ENCODE measurements at regions of chr15 and their contacts with region 1.

Region 1: GRCh38 chr15:64067564-64068030 is 21.3 kb upstream of the DAPK2 start:
- DNase-seq: peak; percentile 76
- H3K4me3 ChIP-seq: no peak overlapping the region
- H3K27ac ChIP-seq: peak overlapping the region in 1 of 8 donors; percentile 4
- H3K4me1 ChIP-seq: peaks cover 5 to 54% (median 23%) of the 10 kb centered on the region in 6 donors
- H3K27me3 ChIP-seq: no peaks in the 10 kb centered on the region
- CTCF ChIP-seq: peak; percentile 73 to 93 (median 88)
- POLR2A ChIP-seq: no peak

Region 2: DNA sequence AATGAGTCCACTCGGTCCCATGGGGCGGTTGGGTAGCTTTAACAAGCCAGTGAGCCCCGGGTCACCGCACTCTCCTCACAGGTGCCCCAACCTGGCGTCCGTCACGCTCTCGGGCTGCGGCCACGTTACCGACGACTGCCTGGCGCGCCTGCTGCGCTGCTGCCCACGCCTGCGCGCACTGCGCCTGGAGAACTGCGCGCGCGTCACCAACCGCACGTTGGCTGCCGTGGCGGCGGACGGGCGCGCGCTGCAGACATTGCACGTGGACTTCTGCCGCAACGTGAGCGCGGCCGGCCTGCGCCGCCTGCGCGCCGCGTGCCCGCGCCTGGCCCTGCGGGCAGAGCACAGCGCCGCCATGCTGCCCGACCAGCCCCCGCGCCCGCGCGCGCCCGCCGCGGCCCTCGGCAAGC is 467.0 kb before region 1 on chr15:
- intact Hi-C with region 1: loop called (anchors 10 kb)
- DNase-seq: peak; percentile 98
- H3K4me3 ChIP-seq: peak overlapping the region; percentile 54 to 93 (median 67)
- H3K27ac ChIP-seq: peak overlapping the region; percentile 77 to 93 (median 90)
- H3K4me1 ChIP-seq: peaks cover 11 to 88% (median 59%) of the 10 kb centered on the region in 6 donors
- H3K27me3 ChIP-seq: no peaks in the 10 kb centered on the region
- CTCF ChIP-seq: peak in 2 of 11 experiments; percentile 27 to 41
- POLR2A ChIP-seq: peak; percentile 32 to 85 (median 48)

Region 3: DNA sequence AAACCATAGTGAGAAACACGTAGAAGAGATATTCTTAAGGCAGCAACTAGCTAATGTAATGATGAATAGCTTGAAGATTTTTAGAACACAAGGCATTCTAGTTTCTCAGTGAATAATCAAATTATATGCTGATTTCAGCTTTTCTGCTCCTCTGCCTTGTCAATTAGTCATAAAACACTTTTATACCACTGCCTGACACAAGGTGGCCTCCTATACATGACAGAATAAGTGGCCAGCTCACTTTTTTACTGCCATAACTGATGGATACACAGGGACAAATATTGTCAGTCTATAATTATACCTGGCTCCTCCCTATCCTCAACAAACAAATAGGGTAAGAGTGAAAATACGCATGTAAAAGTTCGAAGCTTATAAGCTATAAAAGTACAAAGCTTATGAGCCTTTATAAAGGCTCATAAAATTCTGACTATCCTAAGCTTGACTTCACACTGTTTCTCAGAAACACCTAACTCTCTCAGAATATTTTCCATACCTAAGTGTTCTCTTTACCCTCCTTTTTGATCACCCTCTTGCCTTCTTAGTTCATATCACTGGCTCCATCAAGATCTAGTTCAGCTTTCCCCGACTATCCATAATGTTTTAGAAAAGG is 315.4 kb before region 1 on chr15:
- intact Hi-C with region 1: loop called (anchors 5 kb)
- DNase-seq: no peak
- H3K4me3 ChIP-seq: no peak overlapping the region
- H3K27ac ChIP-seq: peak overlapping the region in 2 of 8 donors; percentile 27 to 38
- H3K4me1 ChIP-seq: peaks cover 0 to 9% (median 0%) of the 10 kb centered on the region in 6 donors
- H3K27me3 ChIP-seq: no peaks in the 10 kb centered on the region
- CTCF ChIP-seq: peak in 10 of 11 experiments; percentile 40 to 82 (median 72)
- POLR2A ChIP-seq: no peak

Region 4: DNA sequence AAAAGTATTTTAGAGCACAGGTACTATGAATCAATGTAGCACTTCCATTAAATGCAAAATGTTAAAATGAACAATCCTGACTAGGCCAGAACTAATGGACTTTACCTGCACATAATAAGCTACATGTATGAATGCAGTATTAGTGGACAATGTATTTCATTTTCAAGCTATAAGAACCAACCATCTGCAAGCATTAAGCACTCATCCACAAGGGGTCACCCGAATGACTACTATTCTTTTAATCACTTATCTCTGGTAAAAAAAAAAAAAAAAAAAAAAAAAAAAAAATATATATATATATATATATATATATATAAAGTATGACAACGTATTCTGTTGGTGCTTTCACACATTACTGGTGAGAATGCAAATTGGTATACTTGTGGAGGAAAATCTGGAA is 241.1 kb before region 1 on chr15:
- intact Hi-C with region 1: loop called (anchors 10 kb)
- DNase-seq: no peak
- H3K4me3 ChIP-seq: no peak overlapping the region
- H3K27ac ChIP-seq: no peak overlapping the region
- H3K4me1 ChIP-seq: peaks cover 24 to 97% (median 69%) of the 10 kb centered on the region in 6 donors
- H3K27me3 ChIP-seq: no peaks in the 10 kb centered on the region
- CTCF ChIP-seq: peak in 4 of 11 experiments; percentile 11 to 37 (median 14)
- POLR2A ChIP-seq: no peak

Region 5: DNA sequence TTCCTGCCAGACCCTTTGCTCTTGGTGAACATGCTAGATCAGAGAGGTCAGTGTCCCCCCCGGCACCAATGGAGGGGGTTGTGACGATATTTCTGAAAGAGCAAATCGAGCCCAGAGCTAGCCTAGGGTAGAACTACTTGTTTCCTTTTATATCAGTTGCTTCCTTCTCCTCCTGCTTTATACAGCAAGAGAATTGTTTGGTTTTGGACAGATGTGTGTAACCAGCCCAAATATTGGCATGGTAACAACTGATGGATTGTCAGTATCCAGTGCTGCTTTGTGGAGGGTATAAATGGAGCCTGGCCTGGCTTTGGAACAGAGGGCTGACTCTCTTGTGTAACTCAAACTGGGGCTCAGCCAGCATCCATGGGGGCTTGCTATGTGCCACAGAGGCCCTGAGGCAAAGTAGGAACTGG is 55.3 kb after region 1 on chr15:
- intact Hi-C with region 1: no loop called
- DNase-seq: no peak
- H3K4me3 ChIP-seq: no peak overlapping the region
- H3K27ac ChIP-seq: peak overlapping the region in 2 of 8 donors; percentile 3 to 19
- H3K4me1 ChIP-seq: peaks cover 0 to 4% (median 0%) of the 10 kb centered on the region in 6 donors
- H3K27me3 ChIP-seq: no peaks in the 10 kb centered on the region
- CTCF ChIP-seq: no peak
- POLR2A ChIP-seq: no peak

Region 6: GRCh38 chr15:64284042-64284441 is 216.4 kb after region 1 on chr15:
- intact Hi-C with region 1: no loop called
- DNase-seq: no peak
- H3K4me3 ChIP-seq: no peak overlapping the region
- H3K27ac ChIP-seq: peak overlapping the region in 1 of 8 donors; percentile 19
- H3K4me1 ChIP-seq: peaks cover 0 to 15% (median 0%) of the 10 kb centered on the region in 6 donors
- H3K27me3 ChIP-seq: no peaks in the 10 kb centered on the region
- CTCF ChIP-seq: no peak
- POLR2A ChIP-seq: no peak

Region 7: DNA sequence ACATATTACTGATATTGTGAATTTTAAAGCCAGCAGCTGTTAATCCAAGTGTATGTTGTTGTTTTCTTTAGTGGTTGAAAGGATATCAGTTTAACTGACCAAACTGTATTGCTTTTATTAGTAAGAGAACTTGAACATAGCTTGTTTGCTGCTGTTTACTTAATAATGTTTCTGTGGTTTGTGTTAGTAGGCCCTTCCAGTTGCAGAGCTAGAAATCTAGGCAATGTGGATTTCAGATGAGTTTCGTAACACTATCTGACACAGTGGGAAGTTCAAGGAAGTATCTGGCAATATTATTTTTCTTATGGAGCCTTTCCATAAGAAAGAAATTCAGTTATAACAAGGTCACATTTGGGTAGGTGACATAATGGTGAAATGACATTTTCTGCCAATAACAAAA is 411.3 kb after region 1 on chr15:
- intact Hi-C with region 1: no loop called
- DNase-seq: no peak
- H3K4me3 ChIP-seq: no peak overlapping the region
- H3K27ac ChIP-seq: peak overlapping the region in 1 of 8 donors; percentile 4
- H3K4me1 ChIP-seq: peaks cover 0 to 44% (median 11%) of the 10 kb centered on the region in 6 donors
- H3K27me3 ChIP-seq: no peaks in the 10 kb centered on the region
- CTCF ChIP-seq: no peak
- POLR2A ChIP-seq: no peak

Measured in spleen (tissue), 13 donors.